Activated CD8-positive, alpha-beta memory T cell treated with anti-CD3 and anti-CD28 coated beads, Interleukin-2, amount 10 ng/mL, durations not matched to agents 7 days and 5 days (primary cell): ENCODE measurements at regions of chr20 and their contacts with region 1.

Region 1: GRCh38 chr20:38633577-38634093 is 32.0 kb downstream of the ARHGAP40 start:
- DNase-seq: peak; percentile 68
- ATAC-seq: peak; percentile 89
- H3K4me3 Mint-ChIP-seq: no peak overlapping the region
- H3K27ac Mint-ChIP-seq: no peak overlapping the region
- H3K4me1 Mint-ChIP-seq: peaks cover 3% of the 10 kb centered on the region
- H3K27me3 Mint-ChIP-seq: peaks cover 13% of the 10 kb centered on the region

Region 2: GRCh38 chr20:38550274-38550673 is 83.4 kb before region 1 on chr20:
- CTCF ChIA-PET with region 1: no interaction called
- DNase-seq: no peak
- ATAC-seq: no peak
- H3K4me3 Mint-ChIP-seq: no peak overlapping the region
- H3K27ac Mint-ChIP-seq: no peak overlapping the region
- H3K4me1 Mint-ChIP-seq: no peaks in the 10 kb centered on the region
- H3K27me3 Mint-ChIP-seq: no peaks in the 10 kb centered on the region

Region 3: DNA sequence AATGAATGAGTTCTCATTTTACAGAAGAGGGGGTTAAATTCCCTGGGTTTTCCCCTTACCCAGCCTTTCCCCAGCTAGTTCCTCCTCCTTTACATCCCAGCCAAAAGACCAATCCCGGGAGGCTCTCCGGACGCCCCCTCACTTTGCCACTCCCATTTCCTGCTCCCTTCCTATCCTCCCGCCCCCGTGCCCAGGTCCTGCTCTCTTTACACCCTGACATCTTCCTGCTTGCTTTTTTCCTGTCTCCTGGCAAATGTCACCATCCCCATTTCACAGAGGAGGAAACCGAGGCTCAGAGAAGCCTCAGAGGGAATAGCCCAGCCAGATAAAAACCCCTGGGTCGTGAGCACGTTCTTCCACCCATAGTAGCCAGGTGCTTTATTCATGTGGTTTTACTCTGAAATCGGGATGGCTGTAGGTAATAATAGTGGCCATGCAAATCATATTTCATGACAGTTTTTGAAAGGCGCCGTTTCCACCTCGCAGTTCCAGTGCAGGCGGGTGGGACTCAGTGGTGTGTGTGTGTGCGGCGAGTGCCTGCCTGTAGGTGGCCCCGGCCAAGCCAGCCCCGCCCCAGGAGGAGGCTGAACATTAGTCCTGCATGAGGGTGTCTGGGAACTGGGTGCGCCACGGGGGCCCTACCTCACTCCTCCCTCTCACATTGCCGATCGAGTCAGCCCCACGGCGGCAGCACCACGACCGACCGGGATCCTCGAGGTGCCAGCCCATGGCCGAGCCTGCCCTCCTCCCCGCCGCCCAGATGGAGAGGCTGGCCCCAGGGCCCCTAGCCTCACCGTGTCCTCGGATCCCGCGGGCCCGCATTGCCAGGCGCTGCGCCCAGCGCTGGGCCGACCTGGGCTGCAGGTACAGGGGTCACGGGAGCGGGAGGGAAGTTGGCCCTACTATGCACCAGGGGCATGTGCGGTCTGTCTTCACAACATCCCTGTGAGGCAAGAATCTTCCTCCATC is 32.1 kb before region 1 on chr20 and contains the start of gene ARHGAP40:
- CTCF ChIA-PET with region 1: no interaction called
- DNase-seq: peak; percentile 43
- ATAC-seq: peak; percentile 76
- H3K4me3 Mint-ChIP-seq: no peak within 1 kb of the TSS
- H3K27ac Mint-ChIP-seq: no peak within 1 kb of the TSS
- H3K4me1 Mint-ChIP-seq: peaks cover 8% of the 10 kb centered on the region
- H3K27me3 Mint-ChIP-seq: peaks cover 70% of the 10 kb centered on the region
- total RNA-seq, gene ARHGAP40: not detected

Region 4: DNA sequence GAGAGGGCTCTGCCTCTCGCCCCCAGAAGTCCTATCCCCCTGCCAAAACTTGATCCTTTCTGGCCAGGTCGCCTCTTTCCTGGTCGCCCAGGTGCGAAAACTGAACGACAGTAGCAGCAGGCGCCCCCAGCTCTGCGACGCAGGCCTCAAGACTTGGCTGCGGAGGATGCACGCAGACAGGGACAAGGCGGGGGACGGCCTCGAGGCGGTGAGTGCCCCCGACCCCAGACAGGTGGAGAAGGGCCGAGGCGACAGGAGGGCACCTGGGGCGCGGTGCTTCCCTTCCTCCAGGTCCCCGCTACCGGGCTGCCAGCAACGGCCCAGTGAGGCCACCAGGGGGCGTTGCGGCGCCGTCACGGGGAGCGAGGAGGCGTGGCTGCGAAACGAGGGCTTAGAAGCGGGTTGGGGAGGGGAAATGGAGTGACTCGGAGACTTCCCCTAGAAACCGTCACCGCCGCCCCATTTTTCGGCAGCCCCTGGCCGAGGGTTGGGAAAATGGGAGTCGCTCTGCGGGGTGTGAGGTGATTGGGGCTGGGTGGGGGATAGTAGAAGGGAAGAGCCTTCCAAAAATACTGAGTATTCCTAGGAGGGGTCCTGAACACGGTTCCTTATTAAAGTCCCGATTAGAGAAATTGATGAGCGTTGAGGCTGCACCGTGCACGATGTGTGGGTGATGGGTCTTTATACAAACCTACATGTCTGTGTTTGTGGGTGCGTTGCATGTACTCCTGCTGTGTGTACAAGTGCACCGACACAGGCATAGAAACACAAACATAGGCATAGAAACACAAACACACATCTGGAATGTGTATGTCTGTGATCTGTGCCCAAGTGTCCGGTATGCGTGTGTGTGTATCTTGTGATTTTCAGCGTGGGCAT is 12.6 kb after region 1 on chr20:
- CTCF ChIA-PET with region 1: interaction called, 10 read pairs
- DNase-seq: peak; percentile 90
- ATAC-seq: peak; percentile 98
- H3K4me3 Mint-ChIP-seq: peak overlapping the region; percentile 61
- H3K27ac Mint-ChIP-seq: peak overlapping the region; percentile 17
- H3K4me1 Mint-ChIP-seq: peaks cover 9% of the 10 kb centered on the region
- H3K27me3 Mint-ChIP-seq: peaks cover 37% of the 10 kb centered on the region